ENCODE measurements at regions of chr10 and their contacts with region 1.

Region 1: DNA sequence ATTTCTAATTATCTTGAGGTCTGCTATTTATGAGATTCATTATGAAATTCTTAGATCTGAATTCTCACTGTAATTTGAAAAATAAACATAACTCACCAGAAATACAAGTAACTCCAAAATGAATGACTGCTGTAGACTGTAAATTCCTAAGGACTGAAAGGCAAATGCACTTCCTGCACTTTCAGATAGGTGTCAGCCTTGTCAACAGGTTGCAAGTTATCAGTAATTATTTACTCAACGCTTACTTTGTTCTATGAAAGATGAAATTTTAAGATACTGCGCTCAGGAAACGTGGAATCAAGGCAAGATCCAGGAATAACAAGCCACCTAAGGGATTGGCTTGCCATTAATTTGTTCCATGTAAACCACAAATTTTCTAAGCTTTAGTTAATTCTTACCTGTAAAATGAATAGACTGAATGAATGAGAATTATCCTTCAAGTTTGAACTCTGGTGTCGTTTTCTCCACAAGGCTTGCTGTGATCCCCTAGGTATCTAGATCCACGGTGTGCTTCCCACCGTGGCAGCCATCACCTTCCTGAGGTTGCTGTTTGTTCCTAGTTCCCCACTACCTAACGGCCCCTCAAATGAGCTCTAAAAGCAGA is 12.6 kb downstream of the DHX32 start:
- DNase-seq: peak; percentile 30
- ATAC-seq: no peak
- H3K4me3 ChIP-seq: no peak overlapping the region
- H3K4me3 Mint-ChIP-seq: no peak overlapping the region
- H3K27ac ChIP-seq: no peak overlapping the region
- H3K27ac Mint-ChIP-seq: no peak overlapping the region
- H3K4me1 ChIP-seq: no peaks in the 10 kb centered on the region
- H3K4me1 Mint-ChIP-seq: no peaks in the 10 kb centered on the region
- H3K27me3 ChIP-seq: no peaks in the 10 kb centered on the region
- H3K27me3 Mint-ChIP-seq: no peaks in the 10 kb centered on the region
- CTCF ChIP-seq: peak; percentile 87

Region 2: DNA sequence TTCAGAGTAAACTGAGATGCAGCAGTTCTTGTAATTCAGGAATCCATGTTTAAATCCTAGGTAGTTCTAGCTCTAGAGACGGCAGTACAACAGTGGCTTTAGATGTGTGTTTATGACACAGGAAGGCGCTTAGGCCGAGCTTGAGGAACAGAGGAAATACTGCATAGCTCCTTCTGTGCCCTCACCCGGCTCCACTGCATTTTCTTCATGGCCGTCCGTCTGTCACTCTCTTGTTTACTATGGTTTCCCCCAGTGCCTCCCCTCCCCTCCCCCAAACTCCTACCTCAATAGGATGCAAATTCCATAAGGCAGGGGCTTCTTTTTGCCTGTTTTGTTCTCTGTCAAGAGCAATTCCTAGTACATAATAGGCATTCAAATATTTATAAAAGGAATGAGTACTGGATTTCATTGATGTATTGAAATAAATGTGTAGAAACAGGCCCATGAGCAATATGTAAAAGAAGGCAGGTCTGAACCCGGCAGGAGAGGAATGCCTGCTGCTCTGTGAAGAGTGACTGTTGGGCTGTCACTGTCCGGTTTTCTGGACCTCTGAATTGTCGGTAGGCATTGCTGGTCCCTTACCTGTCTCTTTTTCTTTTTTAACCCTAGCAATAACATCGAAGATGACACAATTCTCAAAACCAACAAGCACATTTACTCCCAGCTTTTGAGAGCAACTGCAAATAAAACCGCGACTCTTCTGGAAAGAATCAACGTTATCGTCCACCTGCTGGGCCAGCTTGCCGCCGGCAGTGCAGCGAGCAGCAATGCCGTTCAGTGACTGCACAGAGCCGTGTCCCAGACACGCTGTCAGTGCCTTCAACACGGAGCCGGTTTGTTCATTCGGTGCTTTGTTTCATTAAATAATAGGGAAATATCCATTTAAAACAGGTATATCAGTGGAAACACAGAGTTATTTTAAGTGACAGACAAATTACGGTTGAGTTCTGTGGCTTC is 105.5 kb before region 1 on chr10:
- CTCF ChIA-PET with region 1: no interaction called
- POLR2A ChIA-PET with region 1: no interaction called
- intact Hi-C with region 1: no loop called
- DNase-seq: no peak
- ATAC-seq: no peak
- H3K4me3 ChIP-seq: no peak overlapping the region
- H3K4me3 Mint-ChIP-seq: no peak overlapping the region
- H3K27ac ChIP-seq: no peak overlapping the region
- H3K27ac Mint-ChIP-seq: no peak overlapping the region
- H3K4me1 ChIP-seq: no peaks in the 10 kb centered on the region
- H3K4me1 Mint-ChIP-seq: no peaks in the 10 kb centered on the region
- H3K27me3 ChIP-seq: no peaks in the 10 kb centered on the region
- H3K27me3 Mint-ChIP-seq: no peaks in the 10 kb centered on the region
- CTCF ChIP-seq: no peak

Region 3: GRCh38 chr10:125844751-125845221 is 23.7 kb before region 1 on chr10:
- CTCF ChIA-PET with region 1: no interaction called
- POLR2A ChIA-PET with region 1: no interaction called
- intact Hi-C with region 1: no loop called
- DNase-seq: no peak
- ATAC-seq: no peak
- H3K4me3 ChIP-seq: no peak overlapping the region
- H3K4me3 Mint-ChIP-seq: no peak overlapping the region
- H3K27ac ChIP-seq: no peak overlapping the region
- H3K27ac Mint-ChIP-seq: no peak overlapping the region
- H3K4me1 ChIP-seq: no peaks in the 10 kb centered on the region
- H3K4me1 Mint-ChIP-seq: no peaks in the 10 kb centered on the region
- H3K27me3 ChIP-seq: no peaks in the 10 kb centered on the region
- H3K27me3 Mint-ChIP-seq: no peaks in the 10 kb centered on the region
- CTCF ChIP-seq: no peak

Region 4: GRCh38 chr10:125936331-125936730 is 67.9 kb after region 1 on chr10:
- CTCF ChIA-PET with region 1: no interaction called
- POLR2A ChIA-PET with region 1: no interaction called
- intact Hi-C with region 1: no loop called
- DNase-seq: no peak
- ATAC-seq: no peak
- H3K4me3 ChIP-seq: no peak overlapping the region
- H3K4me3 Mint-ChIP-seq: no peak overlapping the region
- H3K27ac ChIP-seq: no peak overlapping the region
- H3K27ac Mint-ChIP-seq: no peak overlapping the region
- H3K4me1 ChIP-seq: no peaks in the 10 kb centered on the region
- H3K4me1 Mint-ChIP-seq: no peaks in the 10 kb centered on the region
- H3K27me3 ChIP-seq: peaks cover 0 to 6% (median 3%) of the 10 kb centered on the region in 4 experiments
- H3K27me3 Mint-ChIP-seq: peaks cover 54% of the 10 kb centered on the region
- CTCF ChIP-seq: no peak

Region 5: DNA sequence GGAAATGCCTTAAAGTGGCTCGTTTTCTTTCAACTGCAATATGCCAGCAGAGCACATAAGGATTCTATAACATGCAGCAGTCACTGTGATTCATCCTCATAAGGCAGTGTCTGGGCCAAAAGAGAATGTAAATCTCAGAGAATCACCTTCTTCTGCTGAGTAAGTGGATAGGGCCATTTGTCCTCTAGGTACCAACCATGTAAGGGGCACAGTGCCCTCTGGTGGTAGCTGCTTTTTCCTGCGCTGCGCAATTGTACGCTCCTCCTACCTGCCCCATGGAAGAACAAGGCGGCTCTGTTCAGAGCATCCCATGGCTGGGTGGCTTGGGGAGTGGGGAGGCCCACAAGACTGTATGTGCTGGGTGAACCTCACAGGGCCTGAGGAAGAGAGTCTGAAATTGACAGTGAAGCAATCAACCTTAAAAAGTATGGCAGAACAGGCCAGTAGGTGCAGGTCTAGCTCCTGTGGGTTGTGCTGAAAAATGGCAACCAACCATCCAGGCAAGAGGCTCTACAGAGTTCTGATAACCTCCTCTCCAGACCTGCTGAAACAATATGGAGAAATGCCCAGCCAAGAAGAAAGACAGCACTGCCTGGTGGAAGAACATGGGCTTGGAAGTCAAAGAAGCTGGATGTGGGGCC is 880.7 kb after region 1 on chr10:
- CTCF ChIA-PET with region 1: interaction called, 6 read pairs
- POLR2A ChIA-PET with region 1: no interaction called
- intact Hi-C with region 1: loop called (anchors 2 kb)
- DNase-seq: peak; percentile 38
- ATAC-seq: no peak
- H3K4me3 ChIP-seq: no peak overlapping the region
- H3K4me3 Mint-ChIP-seq: no peak overlapping the region
- H3K27ac ChIP-seq: no peak overlapping the region
- H3K27ac Mint-ChIP-seq: no peak overlapping the region
- H3K4me1 ChIP-seq: no peaks in the 10 kb centered on the region
- H3K4me1 Mint-ChIP-seq: no peaks in the 10 kb centered on the region
- H3K27me3 ChIP-seq: no peaks in the 10 kb centered on the region
- H3K27me3 Mint-ChIP-seq: no peaks in the 10 kb centered on the region
- CTCF ChIP-seq: peak; percentile 52